ENCODE measurements at regions of chr11 and their contacts with region 1.

Region 1: GRCh38 chr11:59668950-59669610 is at the start of gene PATL1:
- DNase-seq: peak; percentile 99 to 100
- ATAC-seq: peak; percentile 96 to 99 (median 98)
- H3K4me3 ChIP-seq: peak within 1 kb of the TSS; percentile 55 to 98 (median 90)
- H3K27ac ChIP-seq: peak within 1 kb of the TSS; percentile 75 to 99 (median 96)
- H3K4me1 ChIP-seq: peaks cover 0 to 43% (median 22%) of the 10 kb centered on the region in 9 donors
- H3K27me3 ChIP-seq: no peaks in the 10 kb centered on the region
- CTCF ChIP-seq: peak in 1 of 9 donors; percentile 1
- total RNA-seq, gene PATL1: 20.2 to 30.4 (median 25.2) TPM

Region 2: GRCh38 chr11:59534676-59535075 is 134.4 kb before region 1 on chr11:
- intact Hi-C with region 1: loop called in 1 of 10 experiments (anchors 5 kb)
- DNase-seq: no peak
- ATAC-seq: no peak
- H3K4me3 ChIP-seq: no peak overlapping the region
- H3K27ac ChIP-seq: no peak overlapping the region
- H3K4me1 ChIP-seq: peaks cover 0 to 13% (median 7%) of the 10 kb centered on the region in 9 donors
- H3K27me3 ChIP-seq: no peaks in the 10 kb centered on the region
- CTCF ChIP-seq: no peak

Region 3: GRCh38 chr11:59550368-59550841 is 118.7 kb before region 1 on chr11:
- intact Hi-C with region 1: loop called in 5 of 10 experiments (anchors 5 to 10 kb)
- DNase-seq: peak; percentile 67 to 71
- ATAC-seq: peak; percentile 79 to 93 (median 88)
- H3K4me3 ChIP-seq: peak overlapping the region; percentile 2 to 61 (median 50)
- H3K27ac ChIP-seq: peak overlapping the region; percentile 37 to 85 (median 78)
- H3K4me1 ChIP-seq: peaks cover 0 to 40% (median 9%) of the 10 kb centered on the region in 9 donors
- H3K27me3 ChIP-seq: no peaks in the 10 kb centered on the region
- CTCF ChIP-seq: peak in 7 of 9 donors; percentile 32 to 63 (median 50)

Region 4: GRCh38 chr11:59573234-59573633 is 95.8 kb before region 1 on chr11:
- intact Hi-C with region 1: loop called in 1 of 10 experiments (anchors 10 kb)
- DNase-seq: no peak
- ATAC-seq: no peak
- H3K4me3 ChIP-seq: no peak overlapping the region
- H3K27ac ChIP-seq: peak overlapping the region in 2 of 10 donors; percentile 22 to 58
- H3K4me1 ChIP-seq: peaks cover 0 to 19% (median 5%) of the 10 kb centered on the region in 9 donors
- H3K27me3 ChIP-seq: no peaks in the 10 kb centered on the region
- CTCF ChIP-seq: no peak

Region 5: DNA sequence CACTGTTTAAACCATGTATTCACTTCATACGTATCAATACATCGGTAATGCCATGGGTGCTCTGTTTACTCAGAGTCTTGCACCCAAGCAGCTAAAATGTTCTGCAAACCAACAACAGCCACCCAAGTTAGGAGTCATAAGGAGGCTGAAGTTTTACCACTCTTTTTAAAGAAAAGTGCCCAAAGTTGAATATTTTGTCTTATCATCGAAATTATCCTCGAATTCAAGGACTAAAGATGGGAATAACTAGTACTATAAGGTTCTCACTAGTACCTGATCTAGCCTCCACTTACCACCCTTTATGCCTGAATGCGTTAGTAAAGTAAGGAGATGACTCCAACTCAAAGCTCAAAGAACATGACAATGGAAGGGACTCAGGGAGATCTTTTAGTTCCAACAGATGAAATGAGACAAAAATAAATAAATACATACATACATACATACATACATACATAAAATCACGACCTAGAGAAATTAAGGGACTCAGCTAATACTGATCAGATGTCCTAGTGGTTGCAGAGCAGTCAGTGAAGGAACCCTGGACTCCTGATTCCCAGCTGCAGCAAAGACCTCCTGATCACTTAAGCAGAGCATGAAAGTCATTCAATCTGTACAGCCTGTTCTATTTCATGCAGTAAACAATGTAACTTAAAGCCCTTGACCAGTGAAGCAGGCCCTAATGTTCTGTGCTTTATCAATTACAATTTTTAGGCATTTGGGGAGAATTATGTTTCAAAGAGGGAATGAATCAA is 61.2 kb before region 1 on chr11:
- intact Hi-C with region 1: no loop called
- DNase-seq: no peak
- ATAC-seq: no peak
- H3K4me3 ChIP-seq: no peak overlapping the region
- H3K27ac ChIP-seq: no peak overlapping the region
- H3K4me1 ChIP-seq: peaks cover 0 to 52% (median 23%) of the 10 kb centered on the region in 9 donors
- H3K27me3 ChIP-seq: no peaks in the 10 kb centered on the region
- CTCF ChIP-seq: no peak

Region 6: GRCh38 chr11:59647245-59647980 is 21.7 kb before region 1 on chr11:
- intact Hi-C with region 1: loop called in 1 of 10 experiments (anchors 2 kb)
- DNase-seq: no peak
- ATAC-seq: no peak
- H3K4me3 ChIP-seq: no peak overlapping the region
- H3K27ac ChIP-seq: no peak overlapping the region
- H3K4me1 ChIP-seq: no peaks in the 10 kb centered on the region
- H3K27me3 ChIP-seq: no peaks in the 10 kb centered on the region
- CTCF ChIP-seq: no peak

Region 7: DNA sequence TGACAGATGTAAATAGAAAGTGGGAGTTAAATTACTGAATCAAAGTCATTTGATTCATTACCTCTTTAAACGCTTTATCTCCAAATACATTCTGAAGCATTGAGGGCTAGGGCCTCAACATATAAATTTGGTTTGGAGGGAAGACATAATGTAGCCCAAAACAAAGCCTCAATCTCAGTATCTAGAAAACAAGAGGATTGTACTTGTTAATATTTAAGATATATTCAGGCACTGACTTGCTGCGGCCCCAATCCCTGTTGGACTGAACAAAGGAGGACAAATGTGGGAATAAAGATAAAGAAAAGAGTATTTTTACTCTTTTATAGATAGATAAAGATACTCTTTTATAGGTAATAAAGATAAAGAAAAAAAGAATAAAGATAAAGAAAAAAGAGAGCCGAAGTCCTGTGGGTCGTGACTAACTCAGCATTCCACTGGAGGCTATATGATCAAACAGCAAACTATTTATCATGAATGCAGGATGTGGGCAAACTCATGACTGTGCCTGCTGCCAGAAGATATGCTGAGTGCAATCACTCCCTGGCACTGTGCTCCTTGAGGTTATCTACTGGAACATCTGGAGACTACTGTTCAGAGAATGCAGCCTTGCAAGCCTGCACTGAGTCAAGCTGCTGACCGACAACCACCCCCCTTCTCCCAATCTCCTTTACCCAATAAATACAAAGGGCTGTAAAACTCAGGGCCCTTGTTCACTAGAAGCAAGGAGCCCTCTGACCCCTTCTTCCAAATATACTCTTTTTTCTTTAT is 37.6 kb after region 1 on chr11:
- intact Hi-C with region 1: no loop called
- DNase-seq: no peak
- ATAC-seq: no peak
- H3K4me3 ChIP-seq: no peak overlapping the region
- H3K27ac ChIP-seq: no peak overlapping the region
- H3K4me1 ChIP-seq: no peaks in the 10 kb centered on the region
- H3K27me3 ChIP-seq: peaks cover 0 to 7% (median 0%) of the 10 kb centered on the region in 7 donors
- CTCF ChIP-seq: no peak

Region 8: DNA sequence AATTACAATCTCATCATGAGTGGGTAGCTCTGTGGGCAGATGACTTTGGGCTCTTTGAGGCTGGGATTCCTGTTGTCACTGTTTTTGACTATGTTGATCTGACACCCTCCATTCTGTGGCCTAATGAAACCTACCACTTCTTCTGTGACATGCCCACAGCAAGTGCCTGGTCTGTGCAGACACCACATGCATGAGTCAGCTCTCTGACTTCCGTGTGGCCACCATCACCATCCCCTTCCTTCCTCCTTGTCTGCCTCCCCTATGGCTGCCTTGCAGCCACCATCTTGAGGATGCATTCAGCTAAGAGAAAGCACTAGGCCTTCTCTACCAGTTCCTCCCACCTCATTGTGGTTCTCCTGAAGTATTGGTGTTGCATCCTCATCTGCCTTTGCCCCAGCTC is 59.8 kb after region 1 on chr11:
- intact Hi-C with region 1: no loop called
- DNase-seq: no peak
- ATAC-seq: no peak
- H3K4me3 ChIP-seq: no peak overlapping the region
- H3K27ac ChIP-seq: peak overlapping the region in 1 of 10 donors; percentile 70
- H3K4me1 ChIP-seq: peaks cover 0 to 19% (median 0%) of the 10 kb centered on the region in 9 donors
- H3K27me3 ChIP-seq: no peaks in the 10 kb centered on the region
- CTCF ChIP-seq: no peak

Region 9: DNA sequence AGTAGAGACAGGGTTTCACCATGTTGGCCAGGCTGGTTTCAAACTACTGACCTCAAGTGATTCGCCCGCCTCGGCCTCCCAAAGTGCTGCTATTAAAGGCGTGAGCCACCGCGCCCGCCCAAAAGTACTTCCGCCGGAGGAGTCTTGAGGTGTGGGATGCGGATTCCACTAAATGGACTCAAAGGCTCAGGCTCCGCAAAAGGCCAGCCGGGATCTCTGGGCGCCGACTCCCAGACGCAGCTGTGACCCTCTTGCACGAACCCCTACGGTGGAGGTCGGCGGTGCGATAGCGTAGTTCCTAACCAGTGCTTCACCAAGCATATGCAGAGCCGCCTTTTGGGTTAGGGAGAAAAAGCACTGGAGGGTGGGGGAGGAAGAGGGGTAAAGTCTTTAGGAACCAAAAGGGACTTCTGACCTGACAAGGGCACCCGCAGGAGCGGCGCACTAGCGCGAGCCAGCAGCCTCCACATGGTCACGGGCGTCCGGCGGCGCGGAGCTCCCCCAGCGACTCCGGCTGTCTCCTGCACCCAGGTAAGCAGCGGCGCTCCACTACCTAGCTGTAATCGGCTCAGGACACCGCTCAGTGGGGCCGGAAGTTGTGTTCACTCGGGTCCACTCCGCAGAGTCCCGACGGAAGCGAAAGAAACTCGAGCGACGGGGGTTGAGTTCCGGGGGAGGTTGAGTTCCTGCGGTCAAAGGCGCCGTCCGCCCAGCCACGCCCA is 141.3 kb after region 1 on chr11 and contains the start of gene MRPL16:
- intact Hi-C with region 1: loop called in 3 of 10 experiments (anchors 5 to 10 kb)
- DNase-seq: peak; percentile 85 to 88
- ATAC-seq: peak; percentile 97 to 99 (median 98)
- H3K4me3 ChIP-seq: peak within 1 kb of the TSS; percentile 82 to 97 (median 92)
- H3K27ac ChIP-seq: peak within 1 kb of the TSS; percentile 62 to 91 (median 88)
- H3K4me1 ChIP-seq: peaks cover 0 to 20% (median 13%) of the 10 kb centered on the region in 9 donors
- H3K27me3 ChIP-seq: no peaks in the 10 kb centered on the region
- CTCF ChIP-seq: peak in 2 of 9 donors; percentile 17 to 23
- total RNA-seq, gene MRPL16: 69.9 to 108 (median 89.8) TPM

Measured in heart right ventricle (tissue), 16 donors.